Dendritic cell treated with granulocyte-macrophage colony-stimulating factor and Interleukin-4, amounts not matched to agents 40 ng/mL and 50 ng/mL, for 4 days (primary cell): ENCODE measurements at regions of chr3 and their contacts with region 1.

Region 1: DNA sequence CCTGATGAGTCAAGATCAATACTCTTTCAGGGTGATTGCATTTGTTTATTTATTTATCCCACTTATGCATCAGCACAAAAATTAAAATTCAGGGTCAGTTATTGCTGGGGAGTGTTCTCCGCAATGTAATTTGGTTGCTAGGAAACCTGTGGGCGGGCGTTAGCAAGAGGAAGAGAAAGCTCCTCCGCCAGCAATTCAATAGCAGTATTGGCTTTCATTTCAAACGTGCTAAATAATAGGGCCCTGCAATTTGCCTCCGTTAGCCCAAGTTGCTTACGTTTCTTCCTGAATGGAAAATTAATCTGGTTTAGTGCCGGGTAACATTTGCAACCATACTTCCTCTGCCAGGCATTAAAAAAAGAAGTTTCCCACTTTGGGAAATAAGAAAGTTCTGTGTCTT is 35.5 kb upstream of the PLCL2 start:
- H3K4me3 Mint-ChIP-seq: peak overlapping the region; percentile 44
- H3K27ac Mint-ChIP-seq: peak overlapping the region; percentile 89
- H3K4me1 Mint-ChIP-seq: peaks cover 58% of the 10 kb centered on the region
- H3K27me3 Mint-ChIP-seq: no peaks in the 10 kb centered on the region

Region 2: DNA sequence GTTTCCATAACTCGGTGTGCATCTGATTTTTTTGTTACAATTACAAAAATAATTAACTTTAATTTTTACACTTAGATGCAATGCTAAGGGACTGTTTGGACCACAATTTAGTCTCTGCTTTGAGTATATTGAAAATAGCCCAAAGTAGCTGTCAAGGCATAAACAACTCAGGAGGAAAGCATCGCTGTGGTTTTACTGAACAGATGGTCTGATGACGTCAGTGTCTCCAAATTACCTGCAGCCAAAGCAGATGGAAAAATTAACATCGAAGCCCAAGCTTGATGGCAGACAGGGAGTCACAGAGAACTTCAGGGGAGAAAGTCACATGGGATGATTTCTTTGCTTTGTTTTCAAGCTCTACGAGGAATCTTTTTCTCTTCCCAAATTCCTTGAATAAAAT is 47.5 kb before region 1 on chr3:
- intact Hi-C with region 1: loop called (anchors 5 kb)
- H3K4me3 Mint-ChIP-seq: no peak overlapping the region
- H3K27ac Mint-ChIP-seq: peak overlapping the region; percentile 71
- H3K4me1 Mint-ChIP-seq: peaks cover 86% of the 10 kb centered on the region
- H3K27me3 Mint-ChIP-seq: no peaks in the 10 kb centered on the region